Sciatic nerve (tissue), 2 donors: ENCODE measurements at regions of chr10 and their contacts with region 1.

Region 1: DNA sequence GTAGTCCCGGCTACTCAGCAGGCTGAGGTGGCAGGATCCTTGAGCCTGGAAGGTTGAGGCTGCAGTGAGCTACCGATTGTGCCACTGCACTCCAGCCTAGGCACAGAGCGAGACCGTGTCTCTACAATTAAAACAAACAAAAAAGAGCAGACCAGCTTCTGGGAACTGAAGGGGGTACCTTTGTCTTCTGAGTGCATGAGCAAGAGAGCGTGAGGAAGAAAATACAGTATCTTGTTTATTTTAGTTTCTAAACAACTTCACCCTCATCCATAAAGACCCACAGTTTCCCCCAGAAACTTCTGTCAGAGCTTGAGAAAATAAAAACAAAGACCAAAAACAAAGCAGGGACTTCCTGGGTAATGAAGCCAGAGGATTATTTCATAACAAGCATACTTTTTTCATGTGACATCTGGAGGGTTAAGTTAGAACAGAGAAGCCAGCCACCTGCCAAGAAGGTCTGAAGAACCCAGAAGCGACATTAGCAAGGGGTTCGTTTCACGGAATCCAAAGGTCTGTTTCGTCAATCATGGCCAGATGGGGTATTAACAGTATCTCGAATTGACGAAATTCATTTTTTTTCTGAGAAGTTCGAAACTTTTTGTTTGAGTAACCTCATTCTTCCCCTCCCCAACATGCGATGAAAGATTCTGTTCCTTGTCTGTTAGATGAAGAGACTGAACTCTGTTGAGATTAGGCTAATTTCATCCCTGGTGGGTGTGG is 10.2 kb upstream of the IL2RA start:
- DNase-seq: no peak
- ATAC-seq: no peak

Region 2: GRCh38 chr10:4639960-4640359 is 1432.4 kb before region 1 on chr10:
- intact Hi-C with region 1: loop called (anchors 5 kb)
- DNase-seq: no peak
- ATAC-seq: peak; percentile 96

Region 3: GRCh38 chr10:4931587-4931986 is 1140.8 kb before region 1 on chr10:
- intact Hi-C with region 1: no loop called
- DNase-seq: no peak
- ATAC-seq: no peak

Region 4: DNA sequence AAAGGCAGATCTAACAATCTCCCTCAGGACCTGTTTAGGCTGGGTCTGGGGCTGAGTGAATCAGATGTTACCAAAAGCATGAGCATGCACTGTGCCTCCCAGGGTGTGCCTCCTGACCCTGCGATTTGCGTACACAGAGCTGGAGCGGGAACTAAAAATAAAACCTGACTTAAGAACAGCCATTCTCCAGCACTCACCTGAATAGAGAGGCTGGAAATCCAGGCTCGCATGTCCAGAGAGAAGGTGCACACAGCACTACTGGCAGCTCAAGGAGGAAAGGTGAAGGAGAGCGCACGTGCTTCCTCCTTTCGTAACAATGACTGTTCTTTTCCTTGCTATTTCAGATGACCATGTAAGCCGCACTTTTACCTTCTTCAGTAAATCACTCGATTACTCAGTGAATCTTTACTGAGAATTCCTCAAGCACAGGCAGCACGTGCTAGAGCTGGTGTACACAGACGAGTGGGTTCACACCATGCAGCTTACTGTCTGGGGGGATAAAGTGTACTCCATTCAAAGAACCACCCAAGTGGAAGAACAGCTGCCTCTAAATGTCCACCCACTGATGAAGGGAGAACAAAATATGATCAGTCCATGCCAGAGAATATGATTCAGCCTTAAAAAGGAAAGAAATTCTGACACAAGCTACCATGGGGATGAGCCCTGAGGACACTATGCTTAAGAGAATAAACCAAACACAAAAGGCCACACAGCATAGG is 1292.8 kb after region 1 on chr10:
- intact Hi-C with region 1: no loop called
- DNase-seq: no peak
- ATAC-seq: no peak